Activated naive CD4-positive, alpha-beta T cell treated with anti-CD3 and anti-CD28 coated beads, Interleukin-2, amount 10 ng/mL, durations not matched to agents 7 days and 5 days (primary cell): ENCODE measurements at regions of chr13 and their contacts with region 1.

Region 1: GRCh38 chr13:99436686-99437416 is 64.4 kb upstream of the TM9SF2 start:
- DNase-seq: peak; percentile 95
- H3K4me3 Mint-ChIP-seq: peak overlapping the region; percentile 25
- H3K27ac Mint-ChIP-seq: peak overlapping the region; percentile 4
- H3K4me1 Mint-ChIP-seq: peaks cover 72% of the 10 kb centered on the region
- H3K27me3 Mint-ChIP-seq: peaks cover 23% of the 10 kb centered on the region

Region 2: DNA sequence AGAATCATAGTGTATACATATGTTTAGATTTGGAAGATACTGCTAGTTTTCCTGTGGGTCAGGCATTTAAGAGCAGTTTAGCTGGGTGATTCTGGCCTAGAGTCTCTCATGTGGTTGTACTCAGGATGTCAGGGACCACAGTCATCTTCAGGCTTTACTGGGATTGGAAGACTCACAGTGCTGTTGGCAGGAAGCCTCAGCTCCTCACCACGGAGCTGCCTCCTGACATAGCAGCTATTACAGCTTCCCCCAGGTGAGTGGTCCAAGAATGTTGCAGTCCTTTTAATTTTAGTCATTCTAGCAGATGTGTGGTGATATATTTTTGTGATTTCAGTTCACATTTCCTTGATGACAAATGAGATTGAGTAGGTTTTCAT is 161.8 kb before region 1 on chr13:
- CTCF ChIA-PET with region 1: interaction called, 256 read pairs
- DNase-seq: peak; percentile 57
- H3K4me3 Mint-ChIP-seq: no peak overlapping the region
- H3K27ac Mint-ChIP-seq: peak overlapping the region; percentile 72
- H3K4me1 Mint-ChIP-seq: peaks cover 85% of the 10 kb centered on the region
- H3K27me3 Mint-ChIP-seq: no peaks in the 10 kb centered on the region

Region 3: DNA sequence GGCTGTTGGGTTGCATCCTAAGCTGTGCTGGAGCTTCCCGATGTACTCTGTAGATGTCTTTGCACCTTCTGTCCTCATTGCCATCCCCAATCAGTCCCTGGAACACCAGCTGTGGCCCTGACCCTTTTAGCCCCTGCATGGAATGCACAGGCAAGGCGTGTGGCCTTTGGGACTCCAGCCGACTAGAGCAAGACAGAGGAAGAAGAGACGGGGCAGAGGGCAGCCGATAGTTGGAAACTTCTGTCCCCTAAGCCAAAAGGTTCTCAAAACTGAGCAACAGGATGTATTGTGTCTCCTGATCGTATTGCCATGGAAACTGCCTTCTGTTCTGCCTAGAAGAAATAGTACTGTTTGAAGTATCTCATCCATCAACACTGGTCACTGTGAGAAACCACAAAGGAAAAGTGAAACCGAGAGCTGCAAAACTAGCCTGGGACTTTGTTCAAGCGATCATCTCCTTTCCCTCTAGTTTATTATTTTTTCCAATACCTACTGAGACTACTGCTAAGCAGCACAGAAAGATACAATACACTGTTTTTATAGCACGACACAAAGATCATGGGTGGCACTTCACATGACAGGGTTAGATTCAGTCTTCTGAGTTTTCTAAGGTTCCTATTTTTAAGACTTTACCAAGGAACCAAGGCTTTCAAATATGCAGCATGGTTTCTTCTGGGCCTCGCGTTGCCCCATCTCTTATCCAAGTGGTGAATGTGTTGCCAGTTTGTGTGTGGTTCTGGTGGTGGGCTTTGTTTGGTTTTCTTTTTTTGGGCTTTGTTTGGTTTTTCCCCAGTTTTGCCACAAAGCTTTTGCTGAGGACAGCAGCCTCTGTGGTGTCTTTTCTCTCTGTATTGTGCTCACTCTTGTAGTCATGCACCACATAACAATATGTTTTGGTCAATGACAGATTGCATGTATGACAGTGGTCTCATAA is 80.4 kb before region 1 on chr13:
- CTCF ChIA-PET with region 1: interaction called, 15 read pairs
- DNase-seq: peak; percentile 79
- H3K4me3 Mint-ChIP-seq: peak overlapping the region; percentile 53
- H3K27ac Mint-ChIP-seq: peak overlapping the region; percentile 95
- H3K4me1 Mint-ChIP-seq: peaks cover 99% of the 10 kb centered on the region
- H3K27me3 Mint-ChIP-seq: no peaks in the 10 kb centered on the region

Region 4: DNA sequence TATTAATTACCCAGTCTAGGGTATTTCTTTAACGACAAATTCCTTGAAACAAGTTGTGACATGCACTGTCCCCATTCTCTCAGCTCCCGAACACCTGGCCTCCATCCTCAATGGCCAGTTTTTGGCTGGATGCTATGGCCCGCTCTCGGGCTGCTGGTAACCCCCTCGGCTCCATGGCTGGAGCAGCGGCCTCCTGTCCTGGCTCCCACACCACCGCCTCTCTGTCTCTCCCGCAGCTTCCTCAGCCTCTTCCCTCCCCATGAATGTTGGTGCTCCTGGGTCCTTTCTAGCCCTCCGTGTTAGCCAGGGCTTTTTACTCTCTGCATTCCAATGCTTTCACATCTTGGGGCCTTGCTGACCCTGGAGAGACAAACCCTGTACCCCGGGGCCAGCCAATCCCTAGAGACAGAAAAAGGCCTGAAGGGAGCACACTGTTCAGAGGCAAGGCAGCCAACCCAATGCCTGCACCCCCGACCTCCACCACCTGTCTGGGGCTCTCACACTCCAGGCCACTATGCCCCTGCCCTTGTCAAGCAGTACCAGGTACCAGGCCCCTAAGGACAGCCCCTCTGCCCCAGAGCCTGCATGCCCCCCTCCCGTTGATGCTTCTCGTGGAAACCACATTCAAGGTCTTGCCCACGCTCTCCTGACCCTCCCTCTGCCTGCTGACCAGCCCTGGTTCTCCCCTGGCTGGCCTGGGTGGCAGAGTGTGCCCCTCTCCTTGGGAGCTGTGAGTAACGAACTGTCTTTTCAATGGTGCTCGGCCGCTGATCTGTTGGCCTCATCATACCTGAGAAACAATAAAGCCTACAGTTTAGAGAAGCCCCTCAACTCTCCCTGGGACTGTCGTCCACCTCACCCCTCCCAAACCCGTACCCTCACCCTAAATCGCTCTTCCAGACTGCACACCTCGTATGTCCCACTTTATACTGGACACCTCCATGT is 42.8 kb before region 1 on chr13:
- CTCF ChIA-PET with region 1: interaction called, 328 read pairs
- DNase-seq: peak; percentile 19
- H3K4me3 Mint-ChIP-seq: no peak overlapping the region
- H3K27ac Mint-ChIP-seq: no peak overlapping the region
- H3K4me1 Mint-ChIP-seq: peaks cover 6% of the 10 kb centered on the region
- H3K27me3 Mint-ChIP-seq: no peaks in the 10 kb centered on the region

Region 5: DNA sequence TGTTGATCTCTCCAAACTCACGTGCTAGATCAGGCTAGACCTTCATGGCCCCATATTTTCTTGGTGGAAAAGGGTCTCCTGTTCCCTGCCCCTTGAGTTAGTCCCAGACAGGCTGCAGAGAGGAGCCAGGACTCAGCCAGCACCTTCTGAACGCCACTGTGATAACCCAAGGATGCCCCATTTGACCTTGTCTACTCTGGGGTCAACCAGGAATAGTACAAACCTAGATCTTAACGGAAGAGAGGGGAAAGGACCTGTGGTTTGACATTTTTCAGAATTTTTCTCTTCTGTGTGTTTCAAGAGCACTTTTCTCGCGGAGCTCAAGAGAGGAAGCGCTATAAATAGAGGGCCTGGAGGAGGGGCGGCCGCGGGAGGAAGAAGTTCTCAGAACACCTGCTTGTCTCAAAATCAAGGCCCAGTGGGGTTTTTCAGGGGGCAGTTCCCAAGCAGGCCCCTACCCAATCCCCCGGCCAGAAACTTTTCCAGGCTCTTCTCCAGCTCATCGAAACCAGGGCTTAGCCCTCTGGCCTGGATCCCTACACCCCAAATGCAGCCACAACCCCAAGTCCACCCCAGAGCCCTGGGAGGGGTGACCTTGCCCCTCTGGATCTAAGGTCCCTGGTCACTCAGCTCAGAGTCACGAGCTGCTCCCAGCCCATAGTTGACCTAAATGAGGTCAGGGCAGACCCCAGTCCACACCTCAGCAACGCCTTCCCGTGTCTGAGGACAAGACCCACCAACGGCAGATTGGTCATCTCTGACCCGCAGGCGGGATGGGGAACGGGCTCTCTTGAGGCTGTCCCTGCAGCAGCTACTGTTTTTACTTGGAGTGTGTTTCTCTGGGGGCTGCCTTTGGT is 11.1 kb before region 1 on chr13:
- CTCF ChIA-PET with region 1: interaction called, 35 read pairs
- DNase-seq: peak; percentile 76
- H3K4me3 Mint-ChIP-seq: peak overlapping the region; percentile 54
- H3K27ac Mint-ChIP-seq: peak overlapping the region; percentile 90
- H3K4me1 Mint-ChIP-seq: peaks cover 80% of the 10 kb centered on the region
- H3K27me3 Mint-ChIP-seq: peaks cover 15% of the 10 kb centered on the region